Right lobe of liver (tissue), 6 donors: ENCODE measurements at regions of chr11 and their contacts with region 1.

Region 1: DNA sequence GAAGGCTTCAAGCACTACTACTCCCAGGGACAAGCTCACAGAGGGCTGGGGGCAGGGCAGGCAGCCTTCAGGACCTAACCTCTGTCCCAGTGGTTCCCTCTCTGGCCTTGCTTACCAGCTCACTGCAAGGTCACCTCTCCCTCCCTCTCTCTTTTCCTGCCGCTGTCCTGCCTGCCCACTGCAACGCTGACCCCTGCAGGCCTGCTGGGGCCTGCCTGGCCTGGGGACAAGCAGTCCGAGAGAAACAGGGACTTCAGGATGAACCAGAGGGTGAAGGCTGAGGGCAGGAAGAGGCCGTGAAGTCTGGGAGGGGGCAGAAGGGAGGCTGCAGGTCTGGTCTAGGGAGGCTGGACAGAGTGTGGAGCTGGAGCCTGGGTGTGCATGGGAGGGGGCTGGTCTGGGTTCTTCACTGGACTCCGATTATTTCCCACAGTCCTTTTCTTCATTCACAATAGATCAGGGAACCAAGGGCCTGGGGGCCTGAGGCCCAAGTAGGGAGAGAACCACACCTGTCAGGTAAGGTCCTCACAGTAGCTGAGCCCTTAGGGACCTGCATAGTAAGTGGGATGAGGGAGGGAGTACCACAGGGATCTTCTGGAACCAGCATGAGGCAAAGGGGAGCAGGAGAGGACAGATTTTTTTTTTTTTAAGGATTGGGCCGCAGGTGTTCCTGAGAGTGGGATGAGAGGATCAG is 3.0 kb downstream of the SYT7 start:
- DNase-seq: peak in 1 of 3 donors; percentile 58
- ATAC-seq: peak in 3 of 4 donors; percentile 5 to 9 (median 8)
- H3K4me3 ChIP-seq: no peak overlapping the region
- H3K27ac ChIP-seq: no peak overlapping the region
- H3K4me1 ChIP-seq: peaks cover 0 to 8% (median 1%) of the 10 kb centered on the region in 4 donors
- H3K27me3 ChIP-seq: no peaks in the 10 kb centered on the region
- CTCF ChIP-seq: peak; percentile 15 to 29 (median 26)
- POLR2A ChIP-seq: no peak

Region 2: GRCh38 chr11:60880643-60881282 is 697.1 kb before region 1 on chr11:
- intact Hi-C with region 1: no loop called
- DNase-seq: no peak
- ATAC-seq: no peak
- H3K4me3 ChIP-seq: no peak overlapping the region
- H3K27ac ChIP-seq: no peak overlapping the region
- H3K4me1 ChIP-seq: no peaks in the 10 kb centered on the region
- H3K27me3 ChIP-seq: no peaks in the 10 kb centered on the region
- CTCF ChIP-seq: no peak
- POLR2A ChIP-seq: no peak

Region 3: DNA sequence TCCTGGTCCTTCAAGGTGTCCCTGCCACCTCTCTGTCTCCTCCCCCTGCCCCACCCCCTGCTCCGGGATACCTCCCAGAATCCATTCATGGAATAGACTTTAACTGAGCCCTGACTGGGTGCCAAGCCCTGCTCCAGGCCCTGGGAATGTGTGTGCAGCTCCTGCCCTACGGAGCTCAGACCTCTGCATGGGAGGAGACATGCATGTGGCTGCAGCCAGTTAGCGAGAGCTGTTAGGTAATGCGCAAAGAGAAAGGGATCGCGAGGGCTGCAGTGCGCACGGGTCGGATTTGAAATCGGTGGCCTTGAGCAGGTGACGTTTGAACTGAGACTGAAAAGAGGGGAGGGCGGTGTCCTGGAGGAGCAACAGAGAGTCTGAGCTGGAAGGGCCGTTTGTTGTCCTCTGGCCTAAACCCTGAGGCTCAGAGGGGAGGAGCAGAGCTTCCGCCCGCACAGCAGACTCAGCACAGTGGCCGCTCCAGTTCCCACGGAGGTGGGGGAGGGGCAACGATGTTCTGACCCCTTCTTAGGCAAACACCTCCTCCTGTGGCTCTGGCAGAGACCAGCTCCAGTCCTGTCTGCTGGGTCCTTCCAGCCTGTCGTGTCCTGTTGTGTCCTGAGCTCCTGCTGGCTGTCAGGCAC is 89.1 kb before region 1 on chr11:
- intact Hi-C with region 1: loop called in 1 of 2 experiments (anchors 5 kb)
- DNase-seq: peak; percentile 67 to 97 (median 94)
- ATAC-seq: peak; percentile 71 to 80 (median 77)
- H3K4me3 ChIP-seq: peak overlapping the region; percentile 15 to 33 (median 23)
- H3K27ac ChIP-seq: peak overlapping the region in 2 of 3 donors; percentile 49 to 81
- H3K4me1 ChIP-seq: peaks cover 0 to 25% (median 10%) of the 10 kb centered on the region in 4 donors
- H3K27me3 ChIP-seq: no peaks in the 10 kb centered on the region
- CTCF ChIP-seq: no peak
- POLR2A ChIP-seq: peak; percentile 20

Region 4: DNA sequence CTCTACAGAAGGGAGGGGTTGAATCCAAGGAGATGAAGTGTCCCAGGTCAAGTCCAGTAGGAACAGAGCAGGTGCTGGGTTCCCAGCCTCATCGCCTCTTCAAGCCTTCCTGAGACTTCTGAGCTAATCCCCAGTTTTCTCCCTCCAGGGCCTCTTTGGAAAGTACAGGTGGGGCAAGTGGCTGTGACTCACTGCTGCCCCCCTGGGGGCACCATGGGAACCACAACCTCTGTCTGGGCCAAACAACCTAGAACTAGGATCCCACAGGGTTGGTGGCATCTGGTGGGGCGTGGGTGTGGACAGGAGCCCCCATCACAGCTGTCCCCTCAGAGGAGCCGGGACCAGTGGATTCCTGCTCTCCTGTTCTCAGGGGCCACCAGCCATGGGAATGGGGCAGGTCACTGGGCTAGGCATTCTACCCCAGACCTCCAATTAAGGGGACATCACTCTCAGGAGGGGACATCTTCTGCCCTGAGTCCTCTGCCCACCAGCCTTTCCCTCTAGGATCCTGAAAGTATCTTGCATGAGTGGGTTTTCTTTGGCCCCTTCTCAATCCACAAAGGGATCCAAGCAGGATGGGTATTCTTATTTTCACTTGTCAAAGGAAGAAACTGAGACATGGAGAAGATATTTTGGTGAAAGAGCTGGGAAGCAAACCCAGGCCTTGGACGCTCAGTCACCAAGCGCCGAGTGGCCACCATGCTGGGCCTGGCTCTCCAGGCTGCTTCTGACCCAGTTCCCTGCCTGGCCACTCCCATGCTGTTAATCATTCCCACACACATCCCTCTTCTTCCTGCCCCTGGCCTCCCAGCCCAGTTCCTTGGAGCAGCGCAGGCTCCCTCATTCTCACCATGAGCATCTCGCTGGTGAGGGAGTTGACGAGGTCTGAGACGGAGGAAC is 45.5 kb before region 1 on chr11:
- intact Hi-C with region 1: loop called in 1 of 2 experiments (anchors 10 kb)
- DNase-seq: peak in 2 of 3 donors; percentile 35 to 68
- ATAC-seq: peak; percentile 9 to 40 (median 22)
- H3K4me3 ChIP-seq: no peak overlapping the region
- H3K27ac ChIP-seq: no peak overlapping the region
- H3K4me1 ChIP-seq: peaks cover 0 to 43% (median 16%) of the 10 kb centered on the region in 4 donors
- H3K27me3 ChIP-seq: no peaks in the 10 kb centered on the region
- CTCF ChIP-seq: peak; percentile 63 to 86 (median 76)
- POLR2A ChIP-seq: peak; percentile 45